Heart right ventricle (tissue), 16 donors: ENCODE measurements at regions of chr13 and their contacts with region 1.

Region 1: GRCh38 chr13:101942038-101942437 is 459.8 kb downstream of the FGF14 start:
- DNase-seq: peak in 1 of 2 donors; percentile 33
- ATAC-seq: peak; percentile 68 to 93 (median 88)
- H3K4me3 ChIP-seq: no peak overlapping the region
- H3K27ac ChIP-seq: no peak overlapping the region
- H3K4me1 ChIP-seq: peaks cover 0 to 9% (median 4%) of the 10 kb centered on the region in 9 donors
- H3K27me3 ChIP-seq: no peaks in the 10 kb centered on the region
- CTCF ChIP-seq: peak; percentile 59 to 86 (median 71)

Region 2: GRCh38 chr13:102141625-102142472 is 199.8 kb after region 1 on chr13:
- intact Hi-C with region 1: loop called in 1 of 10 experiments (anchors 5 kb)
- DNase-seq: no peak
- ATAC-seq: peak in 3 of 8 donors; percentile 28 to 52 (median 38)
- H3K4me3 ChIP-seq: no peak overlapping the region
- H3K27ac ChIP-seq: peak overlapping the region in 2 of 10 donors; percentile 4 to 9
- H3K4me1 ChIP-seq: peaks cover 0 to 18% (median 0%) of the 10 kb centered on the region in 9 donors
- H3K27me3 ChIP-seq: no peaks in the 10 kb centered on the region
- CTCF ChIP-seq: peak; percentile 45 to 78 (median 65)

Region 3: GRCh38 chr13:102394158-102395053 is 452.4 kb after region 1 on chr13:
- intact Hi-C with region 1: loop called in 3 of 10 experiments (anchors 5 to 10 kb)
- DNase-seq: peak; percentile 95 to 97
- ATAC-seq: peak; percentile 96 to 99 (median 98)
- H3K4me3 ChIP-seq: peak overlapping the region; percentile 58 to 93 (median 86)
- H3K27ac ChIP-seq: peak overlapping the region; percentile 44 to 89 (median 83)
- H3K4me1 ChIP-seq: peaks cover 0 to 20% (median 13%) of the 10 kb centered on the region in 9 donors
- H3K27me3 ChIP-seq: peaks cover 0 to 12% (median 0%) of the 10 kb centered on the region in 7 donors
- CTCF ChIP-seq: peak in 6 of 9 donors; percentile 8 to 54 (median 36)

Region 4: DNA sequence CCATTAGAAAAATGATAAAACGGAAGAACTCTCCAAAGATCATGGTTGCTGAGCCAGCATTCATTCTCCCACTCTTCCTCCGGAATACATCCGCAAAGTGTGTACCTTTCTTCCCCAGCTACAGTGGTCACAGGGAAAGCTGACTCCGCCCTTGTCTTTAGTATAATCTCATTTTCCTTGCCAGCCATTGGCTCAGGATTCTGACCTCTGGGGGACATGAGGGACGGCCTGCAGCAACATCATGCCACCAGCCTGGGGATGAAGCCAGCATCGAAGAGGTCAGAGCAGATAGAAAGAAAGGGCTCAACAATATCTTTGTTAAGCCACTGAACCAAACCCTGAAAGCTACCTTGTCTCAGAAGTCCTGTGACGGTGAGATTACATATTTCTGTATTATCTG is 608.5 kb after region 1 on chr13:
- intact Hi-C with region 1: loop called in 9 of 10 experiments (anchors 5 to 10 kb)
- DNase-seq: no peak
- ATAC-seq: no peak
- H3K4me3 ChIP-seq: no peak overlapping the region
- H3K27ac ChIP-seq: no peak overlapping the region
- H3K4me1 ChIP-seq: no peaks in the 10 kb centered on the region
- H3K27me3 ChIP-seq: peaks cover 0 to 6% (median 0%) of the 10 kb centered on the region in 7 donors
- CTCF ChIP-seq: no peak